ENCODE measurements at regions of chr11 and their contacts with region 1.

Region 1: DNA sequence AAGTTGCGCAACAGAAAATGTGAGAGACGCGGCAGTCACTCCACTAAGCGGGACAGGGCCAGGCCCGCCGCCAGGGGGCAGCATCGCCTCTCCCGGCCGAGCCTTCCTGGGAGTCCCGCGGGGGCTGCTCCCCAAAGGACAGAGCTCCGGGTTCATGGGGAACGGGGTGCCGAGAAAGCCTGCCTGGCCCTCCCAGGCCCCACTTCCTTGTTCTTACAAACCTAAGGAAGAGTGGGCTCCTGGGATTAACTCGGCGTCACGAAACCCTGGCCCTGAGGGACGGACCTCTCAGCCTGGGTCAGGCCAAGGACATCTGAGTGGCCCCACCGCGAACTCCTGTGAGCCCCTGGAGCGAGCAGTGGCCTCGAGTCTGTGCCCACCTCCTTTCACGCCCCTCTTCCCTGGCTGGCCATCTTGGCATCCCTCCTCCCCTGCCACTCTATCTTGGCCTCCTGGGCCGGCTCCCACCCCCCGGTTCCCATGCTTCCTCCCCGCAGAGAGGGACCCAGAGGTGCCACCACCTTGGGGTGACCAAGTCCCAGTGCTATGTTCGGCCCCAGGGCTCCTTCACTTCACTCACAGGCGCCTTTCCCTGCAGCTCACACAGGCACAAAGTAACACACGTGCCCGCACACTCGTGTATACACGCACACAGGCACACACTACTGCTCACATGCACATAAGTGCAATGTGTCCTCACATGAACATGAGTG is 99.9 kb upstream of the FGF3 start:
- DNase-seq: peak; percentile 67 to 81 (median 80)
- H3K4me3 ChIP-seq: no peak overlapping the region
- H3K27ac ChIP-seq: no peak overlapping the region
- H3K4me1 ChIP-seq: peaks cover 0 to 5% (median 1%) of the 10 kb centered on the region in 4 experiments
- H3K27me3 ChIP-seq: peaks cover 0 to 48% (median 9%) of the 10 kb centered on the region in 5 experiments

Region 2: GRCh38 chr11:69817265-69818230 is 101.5 kb before region 1 on chr11:
- CTCF ChIA-PET with region 1: no interaction called
- POLR2A ChIA-PET with region 1: no interaction called
- DNase-seq: peak; percentile 21 to 41 (median 29)
- H3K4me3 ChIP-seq: peak overlapping the region in 2 of 7 experiments; percentile 32 to 33
- H3K27ac ChIP-seq: no peak overlapping the region
- H3K4me1 ChIP-seq: peaks cover 0 to 17% (median 12%) of the 10 kb centered on the region in 4 experiments
- H3K27me3 ChIP-seq: peaks cover 0 to 97% (median 37%) of the 10 kb centered on the region in 5 experiments

Region 3: GRCh38 chr11:69930081-69931059 is 11.3 kb after region 1 on chr11:
- CTCF ChIA-PET with region 1: interaction called, 10 read pairs
- POLR2A ChIA-PET with region 1: no interaction called
- DNase-seq: no peak
- H3K4me3 ChIP-seq: no peak overlapping the region
- H3K27ac ChIP-seq: no peak overlapping the region
- H3K4me1 ChIP-seq: peaks cover 0 to 15% (median 13%) of the 10 kb centered on the region in 4 experiments
- H3K27me3 ChIP-seq: peaks cover 0 to 20% (median 9%) of the 10 kb centered on the region in 5 experiments

Region 4: GRCh38 chr11:70191495-70192140 is 272.5 kb after region 1 on chr11:
- CTCF ChIA-PET with region 1: interaction called, 13 read pairs
- POLR2A ChIA-PET with region 1: no interaction called
- DNase-seq: peak; percentile 35 to 57 (median 50)
- H3K4me3 ChIP-seq: no peak overlapping the region
- H3K27ac ChIP-seq: no peak overlapping the region
- H3K4me1 ChIP-seq: no peaks in the 10 kb centered on the region
- H3K27me3 ChIP-seq: peaks cover 0 to 17% (median 3%) of the 10 kb centered on the region in 5 experiments